ENCODE measurements at regions of chr10 and their contacts with region 1.

Region 1: DNA sequence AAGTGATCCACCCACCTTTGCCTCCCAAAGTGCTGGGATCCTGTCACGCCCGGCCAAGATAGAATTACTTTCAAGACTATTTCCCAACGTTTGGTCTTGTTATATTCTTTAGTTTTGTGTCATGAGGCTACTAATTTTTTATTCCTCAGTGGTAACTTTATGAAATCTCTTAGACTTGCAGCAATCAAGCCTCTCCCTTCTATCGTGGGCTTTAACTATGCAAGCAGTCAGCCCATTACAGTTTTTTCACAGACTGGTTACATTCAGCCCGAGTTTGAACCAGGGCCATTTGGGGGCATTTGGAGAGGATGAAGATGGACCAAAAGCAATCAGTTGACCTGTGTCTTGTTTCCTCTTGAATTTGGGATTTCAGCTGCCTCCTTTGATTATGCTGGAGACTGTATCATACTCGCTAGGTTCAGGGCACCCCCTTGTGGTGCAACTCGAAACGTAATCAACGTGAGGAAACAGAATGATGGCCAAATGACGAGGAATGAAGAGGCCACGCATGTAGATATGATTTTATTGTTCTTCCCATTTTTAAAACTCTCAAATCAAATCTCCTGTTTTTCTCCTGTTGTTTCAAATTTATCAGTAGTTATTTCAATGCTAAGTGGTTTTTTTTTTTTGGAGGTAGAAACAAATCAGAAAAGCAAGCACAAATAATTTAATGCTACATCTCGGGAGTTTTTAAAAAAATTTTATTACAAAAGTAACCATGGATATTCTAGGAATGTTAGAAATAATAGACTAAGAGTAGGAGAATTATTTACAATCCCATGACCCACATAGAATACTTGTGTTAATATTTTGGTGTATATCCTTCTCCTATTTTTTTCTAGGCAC is 151.6 kb downstream of the KIAA1217 start:
- DNase-seq: peak; percentile 49
- H3K4me3 ChIP-seq: no peak overlapping the region
- H3K27ac ChIP-seq: no peak overlapping the region
- H3K27me3 ChIP-seq: no peaks in the 10 kb centered on the region
- CTCF ChIP-seq: peak; percentile 87

Region 2: DNA sequence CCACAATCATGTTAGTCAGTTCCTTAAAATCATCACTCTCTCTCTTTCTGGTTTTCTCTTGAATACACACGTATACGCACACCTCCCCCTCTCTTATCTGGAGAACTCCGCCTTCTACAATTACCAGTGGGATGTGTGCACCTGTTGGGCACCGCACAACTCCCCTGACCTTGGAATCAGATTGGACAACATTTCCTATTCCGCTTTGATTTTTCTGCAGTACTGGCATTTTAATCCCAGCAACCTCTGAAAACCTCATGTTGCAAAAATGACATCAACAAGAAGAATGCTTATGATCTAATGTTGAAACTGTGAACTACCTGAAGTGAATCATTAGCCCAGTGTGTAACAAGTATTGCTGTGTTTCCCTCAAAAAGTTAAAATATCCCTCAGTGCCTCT is 42.0 kb before region 1 on chr10:
- CTCF ChIA-PET with region 1: interaction called, 13 read pairs
- POLR2A ChIA-PET with region 1: no interaction called
- DNase-seq: no peak
- H3K4me3 ChIP-seq: no peak overlapping the region
- H3K27ac ChIP-seq: no peak overlapping the region
- H3K27me3 ChIP-seq: no peaks in the 10 kb centered on the region
- CTCF ChIP-seq: no peak

Region 3: DNA sequence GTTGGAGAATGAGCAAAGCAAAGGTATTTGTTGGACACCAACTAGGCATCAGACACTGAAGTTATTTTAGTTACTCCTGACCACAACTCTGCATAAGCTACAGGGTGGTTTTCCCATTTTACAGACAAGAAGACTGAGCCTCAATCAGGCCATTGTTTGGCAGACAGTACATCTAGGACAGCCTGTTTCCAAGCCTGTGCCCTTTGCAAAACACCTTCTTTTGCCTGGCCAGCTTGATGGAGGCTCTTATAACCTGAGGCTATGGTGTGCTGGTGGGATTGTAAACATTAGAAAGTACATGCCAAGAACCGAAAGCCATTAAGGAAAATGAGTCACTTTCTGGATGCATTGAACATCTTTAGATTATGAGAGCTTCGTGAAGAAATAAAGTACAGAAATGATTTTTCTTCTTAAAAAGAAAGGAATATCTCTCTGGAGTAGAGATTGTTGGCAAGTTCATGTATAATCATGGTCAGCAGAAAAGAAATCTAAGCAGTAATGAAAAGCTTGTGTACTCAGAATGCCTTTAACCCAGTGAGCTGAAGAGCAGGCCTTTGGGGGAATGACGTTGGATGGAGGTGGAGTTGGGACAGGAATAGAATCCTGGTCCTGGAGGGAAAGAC is 11.0 kb before region 1 on chr10:
- CTCF ChIA-PET with region 1: interaction called, 14 read pairs
- POLR2A ChIA-PET with region 1: no interaction called
- DNase-seq: no peak
- H3K4me3 ChIP-seq: no peak overlapping the region
- H3K27ac ChIP-seq: peak overlapping the region; percentile 41
- H3K27me3 ChIP-seq: no peaks in the 10 kb centered on the region
- CTCF ChIP-seq: no peak

Region 4: GRCh38 chr10:24513155-24513554 is 152.7 kb after region 1 on chr10:
- CTCF ChIA-PET with region 1: interaction called, 55 read pairs
- POLR2A ChIA-PET with region 1: no interaction called
- DNase-seq: no peak
- H3K4me3 ChIP-seq: no peak overlapping the region
- H3K27ac ChIP-seq: no peak overlapping the region
- H3K27me3 ChIP-seq: no peaks in the 10 kb centered on the region
- CTCF ChIP-seq: peak; percentile 69